Activated CD4-positive, alpha-beta T cell treated with anti-CD3 and anti-CD28 coated beads, Interleukin-2, amount 10 ng/mL, durations not matched to agents 24 days and 14 days (primary cell): ENCODE measurements at regions of chr12 and their contacts with region 1.

Region 1: DNA sequence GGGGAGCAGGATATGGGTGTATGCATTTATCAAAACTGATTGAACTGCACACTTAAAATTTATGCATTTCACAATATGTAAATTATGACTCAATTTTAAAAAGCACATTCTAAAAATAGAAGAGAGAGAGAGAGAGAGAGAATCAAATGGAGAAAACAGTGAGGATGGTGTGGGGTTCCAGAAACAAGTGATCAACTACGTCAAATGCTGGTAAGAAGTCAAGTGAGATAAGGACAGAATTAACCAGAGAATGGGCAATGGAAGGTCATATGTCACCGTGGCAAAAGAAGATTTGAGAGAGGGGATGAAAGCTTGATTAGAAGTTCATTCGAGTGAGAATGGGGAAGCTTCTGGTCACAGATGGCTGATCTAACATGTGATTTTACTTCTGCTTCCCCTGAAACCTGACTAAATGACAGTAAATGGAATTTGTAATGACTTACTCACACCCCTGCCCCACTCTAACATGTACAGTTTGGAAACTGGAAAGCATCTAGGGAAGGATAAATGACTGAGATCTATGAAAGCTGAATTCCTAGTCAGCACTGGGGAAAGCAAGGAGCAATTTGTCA is 276.5 kb upstream of the AMIGO2 start:
- DNase-seq: peak; percentile 71
- H3K4me3 Mint-ChIP-seq: peak overlapping the region; percentile 63
- H3K27ac Mint-ChIP-seq: peak overlapping the region; percentile 98
- H3K4me1 Mint-ChIP-seq: peaks cover 69% of the 10 kb centered on the region
- H3K27me3 Mint-ChIP-seq: no peaks in the 10 kb centered on the region

Region 2: GRCh38 chr12:46209914-46210872 is 1146.0 kb before region 1 on chr12:
- intact Hi-C with region 1: loop called (anchors 10 kb)
- DNase-seq: peak; percentile 79
- H3K4me3 Mint-ChIP-seq: peak overlapping the region; percentile 65
- H3K27ac Mint-ChIP-seq: peak overlapping the region; percentile 94
- H3K4me1 Mint-ChIP-seq: peaks cover 69% of the 10 kb centered on the region
- H3K27me3 Mint-ChIP-seq: no peaks in the 10 kb centered on the region

Region 3: GRCh38 chr12:47270782-47271664 is 85.2 kb before region 1 on chr12:
- intact Hi-C with region 1: loop called (anchors 2 kb)
- DNase-seq: no peak
- H3K4me3 Mint-ChIP-seq: peak overlapping the region; percentile 0
- H3K27ac Mint-ChIP-seq: peak overlapping the region; percentile 2
- H3K4me1 Mint-ChIP-seq: peaks cover 66% of the 10 kb centered on the region
- H3K27me3 Mint-ChIP-seq: no peaks in the 10 kb centered on the region

Region 4: DNA sequence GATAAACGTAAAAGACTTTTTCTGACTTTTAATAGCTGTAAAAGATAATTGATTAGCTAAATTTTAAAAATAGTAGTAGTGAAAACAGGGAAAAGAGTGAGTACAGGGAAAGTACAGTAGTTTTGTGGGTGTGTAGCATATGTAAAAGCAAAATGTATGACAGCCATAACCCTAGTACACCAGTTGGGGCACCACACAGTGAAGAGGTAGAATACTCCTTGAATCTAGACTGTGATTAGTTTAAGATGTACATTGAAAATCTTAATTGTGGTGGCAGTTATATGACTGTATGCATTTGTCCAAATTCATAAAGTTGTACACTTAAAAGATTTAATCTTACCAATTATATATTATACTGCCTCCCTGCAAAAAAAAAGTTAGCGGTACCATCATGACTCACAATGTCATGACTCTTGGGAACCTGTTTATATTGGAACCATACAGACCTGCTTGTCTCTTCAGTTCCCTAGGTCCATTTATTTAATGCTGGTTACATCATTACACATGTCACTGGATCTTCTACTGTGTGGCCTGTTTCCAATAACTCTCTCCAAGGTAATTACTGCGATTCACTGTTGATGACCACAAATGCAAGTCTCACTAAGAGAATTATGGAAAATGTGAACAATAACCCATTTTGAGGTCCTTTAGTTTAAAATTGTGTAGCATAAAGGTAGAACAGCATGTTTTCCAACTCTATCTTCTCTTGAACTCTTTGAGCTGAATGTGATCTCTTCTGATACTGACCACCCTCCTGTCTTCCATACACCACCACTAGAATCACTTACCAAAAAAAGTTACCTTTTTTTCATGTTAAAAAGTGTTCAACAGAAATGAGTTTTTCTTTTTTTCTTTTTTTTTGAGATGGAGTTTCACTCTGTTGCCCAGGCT is 12.3 kb before region 1 on chr12:
- intact Hi-C with region 1: loop called (anchors 1 kb)
- DNase-seq: no peak
- H3K4me3 Mint-ChIP-seq: no peak overlapping the region
- H3K27ac Mint-ChIP-seq: peak overlapping the region; percentile 87
- H3K4me1 Mint-ChIP-seq: peaks cover 21% of the 10 kb centered on the region
- H3K27me3 Mint-ChIP-seq: no peaks in the 10 kb centered on the region

Region 5: DNA sequence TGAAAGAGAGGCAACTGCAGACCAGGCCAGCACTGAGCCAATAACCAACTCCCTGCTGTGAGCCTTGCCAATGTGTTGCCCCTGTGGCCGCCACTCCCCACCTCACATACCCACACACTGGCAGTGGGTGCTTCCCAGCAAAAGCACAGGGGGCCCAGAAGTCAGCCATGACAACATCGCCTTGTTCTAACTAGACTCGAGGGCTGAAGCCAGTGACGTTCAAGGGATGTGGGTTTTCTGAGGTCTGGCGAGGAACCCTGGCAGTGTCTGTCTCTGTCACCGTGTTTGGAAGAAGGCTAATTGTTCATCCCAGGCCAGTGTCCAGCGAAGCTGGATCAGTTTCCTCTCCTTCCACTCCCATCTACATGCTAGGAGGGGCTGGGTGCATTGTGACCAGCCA is 35.4 kb after region 1 on chr12:
- intact Hi-C with region 1: loop called (anchors 1 kb)
- DNase-seq: peak; percentile 88
- H3K4me3 Mint-ChIP-seq: peak overlapping the region; percentile 81
- H3K27ac Mint-ChIP-seq: peak overlapping the region; percentile 99
- H3K4me1 Mint-ChIP-seq: peaks cover 77% of the 10 kb centered on the region
- H3K27me3 Mint-ChIP-seq: no peaks in the 10 kb centered on the region